Right cardiac atrium (tissue), 5 donors: ENCODE measurements at regions of chr17 and their contacts with region 1.

Region 1: GRCh38 chr17:40443583-40444327 is 505 bp downstream of the IGFBP4 start:
- DNase-seq: peak; percentile 87 to 95 (median 95)
- ATAC-seq: peak; percentile 40 to 54
- H3K4me3 ChIP-seq: peak overlapping the region; percentile 63
- H3K27ac ChIP-seq: peak overlapping the region; percentile 80
- H3K4me1 ChIP-seq: peaks cover 12% of the 10 kb centered on the region
- H3K27me3 ChIP-seq: no peaks in the 10 kb centered on the region

Region 2: DNA sequence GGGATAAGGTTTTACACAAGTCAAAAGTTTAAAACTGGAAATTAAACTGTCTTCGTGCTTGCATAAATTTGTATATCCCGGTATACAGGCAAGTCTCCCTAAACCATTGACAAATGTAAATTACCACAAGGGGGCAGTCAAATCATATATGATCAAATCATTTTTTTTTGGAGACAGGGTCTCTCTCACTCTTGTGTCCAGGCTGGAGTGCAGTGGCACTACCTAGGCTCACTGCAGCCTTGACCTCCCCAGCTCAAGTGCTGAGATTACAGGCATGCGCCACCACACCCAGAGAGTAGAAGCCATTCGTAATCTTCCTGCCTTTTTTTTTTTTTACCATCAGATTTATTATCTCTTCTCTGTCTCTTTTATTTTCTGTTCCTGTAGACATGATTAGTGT is 44.6 kb before region 1 on chr17:
- intact Hi-C with region 1: no loop called
- DNase-seq: no peak
- ATAC-seq: peak in 1 of 2 donors; percentile 55
- H3K4me3 ChIP-seq: no peak overlapping the region
- H3K27ac ChIP-seq: no peak overlapping the region
- H3K4me1 ChIP-seq: no peaks in the 10 kb centered on the region
- H3K27me3 ChIP-seq: no peaks in the 10 kb centered on the region

Region 3: GRCh38 chr17:40432864-40433528 is 10.8 kb before region 1 on chr17:
- intact Hi-C with region 1: no loop called
- DNase-seq: peak in 1 of 3 donors; percentile 68
- ATAC-seq: peak; percentile 36 to 62
- H3K4me3 ChIP-seq: no peak overlapping the region
- H3K27ac ChIP-seq: no peak overlapping the region
- H3K4me1 ChIP-seq: peaks cover 17% of the 10 kb centered on the region
- H3K27me3 ChIP-seq: no peaks in the 10 kb centered on the region

Region 4: GRCh38 chr17:40474419-40475002 is 30.8 kb after region 1 on chr17:
- intact Hi-C with region 1: loop called in 3 of 4 experiments (anchors 2 to 5 kb)
- DNase-seq: peak in 1 of 3 donors; percentile 57
- ATAC-seq: peak in 1 of 2 donors; percentile 5
- H3K4me3 ChIP-seq: no peak overlapping the region
- H3K27ac ChIP-seq: no peak overlapping the region
- H3K4me1 ChIP-seq: no peaks in the 10 kb centered on the region
- H3K27me3 ChIP-seq: no peaks in the 10 kb centered on the region

Region 5: DNA sequence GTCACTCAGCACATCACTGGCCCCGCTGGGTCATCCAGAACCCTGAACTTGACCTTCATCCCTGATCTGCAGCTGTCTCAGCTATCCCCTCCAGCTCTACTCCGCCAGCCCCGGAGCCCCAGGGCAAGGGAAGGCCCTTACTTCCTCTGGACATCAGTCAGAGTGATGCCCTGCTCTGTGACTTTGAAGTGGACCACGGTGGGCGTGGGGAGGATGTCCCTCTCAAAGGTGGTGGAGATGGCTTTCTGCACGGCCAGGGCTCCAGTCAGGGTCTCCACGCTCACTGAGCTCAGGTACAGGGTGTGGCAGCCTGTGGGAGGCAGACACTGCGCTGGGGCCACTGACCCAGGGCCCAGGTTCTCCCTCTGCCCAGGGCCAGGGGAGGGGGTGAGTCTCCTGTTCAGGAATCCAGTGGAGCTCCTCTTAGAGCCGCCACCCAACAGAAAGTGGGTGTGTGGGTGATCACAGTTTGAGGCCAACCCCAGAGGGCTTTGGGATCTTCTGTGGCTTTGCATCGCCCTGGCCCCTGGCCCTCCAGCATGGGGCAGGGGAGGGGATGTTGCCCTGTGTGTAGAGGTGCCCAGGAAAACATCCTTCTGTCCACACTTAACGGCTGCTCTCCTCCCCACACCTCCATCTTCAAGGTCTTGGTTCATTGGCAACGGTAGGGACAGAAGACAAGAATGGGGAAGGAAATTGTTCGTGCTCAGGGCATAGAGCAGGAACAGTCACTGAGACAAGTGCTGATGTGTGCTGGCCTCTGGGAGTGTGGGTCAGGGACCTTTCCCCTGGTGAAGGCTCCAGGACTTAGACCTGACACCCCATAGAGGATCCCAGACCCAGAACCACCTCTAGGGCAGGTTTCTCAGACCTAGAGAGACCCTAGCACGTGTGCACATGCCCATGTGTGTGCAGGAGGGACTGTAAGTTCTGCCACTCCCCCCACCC is 36.1 kb after region 1 on chr17:
- intact Hi-C with region 1: loop called in 3 of 4 experiments (anchors 2 to 5 kb)
- DNase-seq: peak in 2 of 3 donors; percentile 12 to 51
- ATAC-seq: no peak
- H3K4me3 ChIP-seq: no peak overlapping the region
- H3K27ac ChIP-seq: no peak overlapping the region
- H3K4me1 ChIP-seq: no peaks in the 10 kb centered on the region
- H3K27me3 ChIP-seq: no peaks in the 10 kb centered on the region

Region 6: DNA sequence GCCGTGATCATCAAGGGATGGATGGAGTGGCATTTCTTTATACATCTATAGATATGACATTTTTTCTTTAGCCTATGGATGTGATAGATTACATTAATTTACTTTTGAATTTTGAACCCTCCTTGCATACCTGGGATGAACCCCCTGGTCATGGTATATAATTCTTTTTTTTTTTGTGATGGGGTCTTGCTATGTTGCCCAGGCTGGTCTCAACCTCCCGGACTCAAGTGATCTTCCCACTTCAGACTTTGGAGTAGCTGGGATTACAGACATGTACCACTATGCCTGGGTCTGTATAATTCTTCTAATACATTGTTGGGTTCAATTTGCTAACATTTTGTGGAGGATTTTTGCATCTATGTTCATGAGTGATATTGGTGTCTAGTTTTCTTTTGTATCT is 59.4 kb after region 1 on chr17:
- intact Hi-C with region 1: no loop called
- DNase-seq: no peak
- ATAC-seq: no peak
- H3K4me3 ChIP-seq: no peak overlapping the region
- H3K27ac ChIP-seq: no peak overlapping the region
- H3K4me1 ChIP-seq: peaks cover 9% of the 10 kb centered on the region
- H3K27me3 ChIP-seq: no peaks in the 10 kb centered on the region

Region 7: GRCh38 chr17:40516581-40517285 is 73.0 kb after region 1 on chr17:
- intact Hi-C with region 1: no loop called
- DNase-seq: peak in 1 of 3 donors; percentile 46
- ATAC-seq: peak in 1 of 2 donors; percentile 60
- H3K4me3 ChIP-seq: no peak overlapping the region
- H3K27ac ChIP-seq: no peak overlapping the region
- H3K4me1 ChIP-seq: no peaks in the 10 kb centered on the region
- H3K27me3 ChIP-seq: no peaks in the 10 kb centered on the region

Region 8: GRCh38 chr17:40531051-40531991 is 87.6 kb after region 1 on chr17:
- intact Hi-C with region 1: loop called (anchors 2 to 10 kb)
- DNase-seq: no peak
- ATAC-seq: no peak
- H3K4me3 ChIP-seq: no peak overlapping the region
- H3K27ac ChIP-seq: no peak overlapping the region
- H3K4me1 ChIP-seq: peaks cover 6% of the 10 kb centered on the region
- H3K27me3 ChIP-seq: no peaks in the 10 kb centered on the region

Region 9: DNA sequence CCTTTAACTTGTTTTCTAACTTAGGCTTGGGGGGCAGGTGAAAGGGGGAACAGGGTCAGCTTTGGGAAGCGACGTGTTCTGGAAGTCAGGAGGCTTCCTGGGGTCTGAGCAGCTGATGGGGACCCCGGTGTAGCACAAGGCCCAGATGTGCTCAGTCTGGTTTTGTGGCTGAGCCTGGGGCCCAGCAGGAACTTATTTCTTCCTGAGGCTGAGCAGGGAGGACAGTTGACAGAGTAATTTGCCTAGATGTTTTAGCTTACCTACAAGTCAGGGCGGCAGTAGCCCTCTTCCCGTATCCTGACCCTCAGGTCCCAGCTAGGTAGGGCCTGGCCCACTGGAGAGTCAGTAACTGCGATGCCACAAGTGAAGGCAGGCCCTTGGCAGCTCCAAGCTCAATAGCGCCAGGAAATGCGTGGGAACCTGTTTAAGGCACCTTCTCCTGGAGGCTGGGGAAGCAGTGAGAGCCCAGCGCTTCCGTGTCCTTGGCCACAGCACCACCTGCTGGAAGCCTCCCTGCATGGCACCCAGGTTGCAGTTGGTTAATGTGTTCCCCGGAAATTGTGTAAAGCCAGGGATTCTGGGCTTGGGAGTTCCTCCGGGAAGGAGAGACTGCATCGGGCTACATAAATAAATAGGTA is 116.3 kb after region 1 on chr17:
- intact Hi-C with region 1: loop called in 2 of 4 experiments (anchors 2 to 5 kb)
- DNase-seq: peak; percentile 87 to 94 (median 94)
- ATAC-seq: peak; percentile 74 to 82
- H3K4me3 ChIP-seq: no peak overlapping the region
- H3K27ac ChIP-seq: peak overlapping the region; percentile 74
- H3K4me1 ChIP-seq: peaks cover 21% of the 10 kb centered on the region
- H3K27me3 ChIP-seq: no peaks in the 10 kb centered on the region